ENCODE measurements at regions of chr11 and their contacts with region 1.

Region 1: DNA sequence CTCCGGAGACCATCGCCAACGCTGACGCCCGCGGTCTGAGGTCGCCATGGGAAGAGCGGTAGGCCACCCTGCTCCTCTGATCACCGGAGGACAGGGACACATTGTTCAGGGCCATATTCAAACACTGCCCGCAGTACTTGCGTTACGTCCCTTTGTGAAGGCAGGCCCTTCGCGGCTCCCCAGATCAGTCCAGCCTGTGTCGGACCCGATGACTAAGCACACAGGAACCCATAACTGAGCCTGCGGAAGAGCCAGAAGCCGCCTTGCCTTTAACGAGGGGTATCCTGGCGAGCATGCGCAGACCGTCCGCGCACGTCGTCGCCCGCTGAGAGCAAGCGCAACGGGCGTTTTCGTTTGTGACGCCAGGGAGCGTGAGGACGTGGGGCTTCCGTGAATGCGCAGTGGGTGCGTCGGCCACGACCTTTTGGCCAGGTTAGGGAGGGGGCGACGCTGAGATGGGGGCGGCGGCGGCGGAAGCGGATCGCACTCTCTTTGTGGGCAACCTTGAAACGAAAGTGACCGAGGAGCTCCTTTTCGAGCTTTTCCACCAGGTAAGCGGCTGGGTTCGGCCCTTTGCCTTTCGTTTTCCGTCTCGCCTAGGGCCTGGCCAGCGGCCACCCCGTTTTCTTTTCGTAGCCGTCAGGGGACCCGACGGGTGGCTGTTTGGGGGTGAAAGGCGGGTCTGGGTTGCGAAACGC is at the starts of genes C11orf71 and RBM7:
- DNase-seq: peak; percentile 98
- H3K4me3 ChIP-seq: peak within 1 kb of the TSS; percentile 72
- H3K27ac ChIP-seq: peak within 1 kb of the TSS; percentile 98
- H3K4me1 ChIP-seq: peaks cover 14% of the 10 kb centered on the region
- H3K27me3 ChIP-seq: no peaks in the 10 kb centered on the region
- CTCF ChIP-seq: no peak
- total RNA-seq, gene C11orf71: 13.1 to 14.3 TPM
- total RNA-seq, gene RBM7: 28.3 to 41.1 TPM

Region 2: GRCh38 chr11:114340311-114341131 is 59.8 kb before region 1 on chr11:
- intact Hi-C with region 1: loop called (anchors 10 kb)
- DNase-seq: peak; percentile 38
- H3K4me3 ChIP-seq: no peak overlapping the region
- H3K27ac ChIP-seq: no peak overlapping the region
- H3K4me1 ChIP-seq: no peaks in the 10 kb centered on the region
- H3K27me3 ChIP-seq: no peaks in the 10 kb centered on the region
- CTCF ChIP-seq: peak; percentile 73

Region 3: DNA sequence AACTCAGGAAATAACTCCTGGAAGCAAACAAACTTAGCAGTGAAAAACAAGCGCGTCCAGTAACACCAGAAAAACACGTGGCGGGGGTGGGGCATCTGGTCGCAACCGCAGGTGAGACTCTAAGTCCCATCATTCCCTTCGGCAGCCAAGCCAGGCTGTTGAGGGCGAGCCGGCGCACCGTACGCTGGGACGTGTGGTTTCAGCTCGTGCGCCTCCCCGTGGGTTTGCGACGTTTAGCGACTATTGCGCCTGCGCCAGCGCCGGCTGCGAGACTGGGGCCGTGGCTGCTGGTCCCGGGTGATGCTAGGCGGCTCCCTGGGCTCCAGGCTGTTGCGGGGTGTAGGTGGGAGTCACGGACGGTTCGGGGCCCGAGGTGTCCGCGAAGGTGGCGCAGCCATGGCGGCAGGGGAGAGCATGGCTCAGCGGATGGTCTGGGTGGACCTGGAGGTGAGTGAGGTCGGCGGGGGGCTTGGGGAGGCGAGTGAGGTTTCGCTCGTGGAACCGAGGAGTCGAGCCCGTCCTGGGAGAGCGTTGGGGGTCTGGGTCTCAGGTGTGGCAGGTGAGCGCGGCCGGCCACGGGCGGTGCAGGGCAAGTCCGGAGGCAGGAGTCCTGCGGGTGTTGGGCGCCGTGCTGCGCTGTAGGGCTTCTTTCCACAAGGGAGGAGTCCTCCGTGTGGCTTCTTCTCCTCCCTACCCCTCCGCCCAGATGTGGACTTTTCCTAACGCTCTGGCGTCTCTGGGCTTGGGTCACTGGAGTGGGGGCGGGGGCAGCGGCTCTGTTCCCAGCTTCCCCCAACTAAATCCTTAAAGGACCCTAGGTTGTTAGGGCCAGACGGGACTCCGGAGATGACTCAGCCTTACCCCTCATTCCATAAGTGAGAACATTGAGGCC is 39.1 kb after region 1 on chr11 and contains the start of gene REXO2:
- intact Hi-C with region 1: loop called (anchors 5 kb)
- DNase-seq: peak; percentile 98
- H3K4me3 ChIP-seq: peak within 1 kb of the TSS; percentile 93
- H3K27ac ChIP-seq: peak within 1 kb of the TSS; percentile 61
- H3K4me1 ChIP-seq: peaks cover 4% of the 10 kb centered on the region
- H3K27me3 ChIP-seq: no peaks in the 10 kb centered on the region
- CTCF ChIP-seq: no peak
- total RNA-seq, gene REXO2: 46.6 to 55.5 TPM

Region 4: DNA sequence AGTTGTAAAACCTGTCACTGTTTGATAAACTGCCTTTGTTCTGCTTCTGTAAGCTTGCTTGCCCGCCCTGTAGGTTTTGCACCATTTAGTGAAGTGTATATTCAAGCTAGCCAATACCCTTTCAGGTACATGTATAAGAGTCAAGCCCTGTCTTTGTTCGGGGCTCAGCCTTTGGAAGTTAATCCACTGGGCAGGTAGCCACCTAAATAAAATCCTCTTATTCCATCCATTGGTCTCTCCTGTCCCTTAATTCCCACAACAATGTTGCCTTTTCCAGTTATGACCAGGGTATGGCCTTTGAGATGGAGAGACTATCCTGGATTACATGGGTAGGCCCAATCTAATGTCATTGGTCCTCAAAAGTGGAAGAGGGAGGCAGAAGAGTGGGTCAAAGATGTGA is 125.3 kb after region 1 on chr11:
- intact Hi-C with region 1: no loop called
- DNase-seq: peak; percentile 38
- H3K4me3 ChIP-seq: no peak overlapping the region
- H3K27ac ChIP-seq: no peak overlapping the region
- H3K4me1 ChIP-seq: no peaks in the 10 kb centered on the region
- H3K27me3 ChIP-seq: no peaks in the 10 kb centered on the region
- CTCF ChIP-seq: no peak